Psoas muscle (tissue), 8 donors: ENCODE measurements at regions of chr14 and their contacts with region 1.

Region 1: DNA sequence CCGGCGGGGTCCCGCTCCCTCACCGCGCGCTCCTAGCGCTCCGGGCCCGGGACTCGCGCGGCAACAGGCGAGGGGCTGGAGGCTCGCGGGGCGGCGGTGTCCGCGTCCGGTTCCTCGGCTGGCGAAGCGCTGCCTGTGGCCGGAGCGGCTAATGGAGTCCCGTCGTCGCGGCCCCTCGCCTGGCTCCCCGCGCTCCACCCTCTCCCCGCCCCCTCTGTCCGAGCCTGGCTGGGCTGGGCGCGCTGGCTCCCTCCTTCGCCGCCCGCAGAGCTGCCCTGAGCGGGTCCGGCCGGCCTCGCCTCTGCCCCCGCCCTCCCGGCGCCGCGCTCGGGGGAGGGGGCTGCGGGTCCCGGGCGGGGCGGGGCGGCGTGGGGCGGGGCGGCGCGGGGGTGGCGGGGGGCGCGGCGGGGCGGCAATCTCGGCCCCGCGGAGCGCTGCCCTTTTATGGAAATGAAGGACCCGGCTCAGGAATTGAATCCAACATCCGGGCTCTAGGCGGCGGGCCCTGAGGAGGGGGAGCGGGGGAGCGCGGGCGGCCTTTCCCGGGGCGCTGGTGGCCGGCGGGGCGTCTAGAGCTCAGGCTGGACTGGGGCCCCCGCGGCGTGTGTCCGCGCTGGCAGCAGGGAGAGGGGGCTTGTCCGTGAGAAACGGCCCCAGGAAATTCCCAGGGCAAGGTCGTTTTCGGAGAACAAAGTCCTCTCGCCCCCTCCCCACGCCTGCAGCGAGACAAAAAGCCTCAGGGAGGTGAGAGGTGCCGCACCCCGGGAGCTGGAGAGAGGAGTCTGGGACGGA is at the start of gene FERMT2:
- DNase-seq: peak; percentile 89 to 94
- ATAC-seq: peak; percentile 87 to 91 (median 88)
- H3K4me3 ChIP-seq: peak within 1 kb of the TSS; percentile 96
- H3K27ac ChIP-seq: peak within 1 kb of the TSS; percentile 99
- H3K4me1 ChIP-seq: peaks cover 18% of the 10 kb centered on the region
- H3K27me3 ChIP-seq: no peaks in the 10 kb centered on the region
- CTCF ChIP-seq: no peak
- total RNA-seq, gene FERMT2: 57.5 to 104 (median 78.9) TPM

Region 2: GRCh38 chr14:52873694-52874093 is 77.4 kb before region 1 on chr14:
- intact Hi-C with region 1: loop called in 1 of 2 experiments (anchors 10 kb)
- DNase-seq: peak; percentile 47 to 67
- ATAC-seq: peak in 2 of 4 donors; percentile 44 to 68
- H3K4me3 ChIP-seq: no peak overlapping the region
- H3K27ac ChIP-seq: no peak overlapping the region
- H3K4me1 ChIP-seq: peaks cover 6% of the 10 kb centered on the region
- H3K27me3 ChIP-seq: no peaks in the 10 kb centered on the region
- CTCF ChIP-seq: no peak

Region 3: DNA sequence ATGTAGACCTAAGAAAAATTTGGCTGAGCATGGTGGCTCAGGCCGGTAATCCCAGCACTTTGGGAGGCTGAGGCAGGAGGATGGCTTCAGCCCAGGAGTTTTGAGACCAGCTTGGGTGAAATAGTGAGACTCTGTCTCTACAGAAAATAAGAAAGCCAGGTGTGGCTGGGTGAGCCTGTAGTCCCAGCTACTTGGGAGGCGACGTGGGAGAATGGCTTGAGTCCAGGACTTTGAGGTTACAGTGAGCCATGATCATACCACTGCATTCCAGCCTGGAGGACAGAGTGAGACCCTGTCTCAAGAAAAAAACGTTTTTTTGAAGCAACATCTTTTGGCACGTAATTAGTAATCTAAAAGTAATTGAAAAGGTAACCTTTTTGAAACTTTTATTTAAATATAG is 71.1 kb before region 1 on chr14:
- intact Hi-C with region 1: loop called (anchors 10 kb)
- DNase-seq: no peak
- ATAC-seq: no peak
- H3K4me3 ChIP-seq: no peak overlapping the region
- H3K27ac ChIP-seq: no peak overlapping the region
- H3K4me1 ChIP-seq: peaks cover 6% of the 10 kb centered on the region
- H3K27me3 ChIP-seq: no peaks in the 10 kb centered on the region
- CTCF ChIP-seq: no peak

Region 4: DNA sequence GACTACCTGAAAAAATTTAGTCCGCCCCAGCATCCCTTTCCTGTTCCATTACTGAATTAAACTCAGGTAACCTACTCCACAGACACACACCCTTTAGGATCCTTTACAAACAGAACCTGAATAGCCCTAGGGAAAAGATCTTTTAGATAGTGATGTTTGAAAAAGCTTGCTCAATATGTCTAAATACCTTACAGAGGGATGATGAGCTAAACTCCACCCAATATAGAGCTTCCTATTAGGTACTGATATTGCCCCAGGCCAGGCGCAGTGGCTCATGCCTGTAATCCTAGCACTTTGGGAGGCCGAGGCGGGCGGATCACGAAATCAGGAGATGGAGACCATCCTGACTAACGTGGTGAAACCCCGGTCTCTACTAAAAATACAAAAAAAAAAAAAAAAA is 50.4 kb before region 1 on chr14:
- intact Hi-C with region 1: loop called in 1 of 2 experiments (anchors 1 kb)
- DNase-seq: no peak
- ATAC-seq: no peak
- H3K4me3 ChIP-seq: no peak overlapping the region
- H3K27ac ChIP-seq: no peak overlapping the region
- H3K4me1 ChIP-seq: peaks cover 39% of the 10 kb centered on the region
- H3K27me3 ChIP-seq: no peaks in the 10 kb centered on the region
- CTCF ChIP-seq: no peak

Region 5: GRCh38 chr14:52918486-52918885 is 32.6 kb before region 1 on chr14:
- intact Hi-C with region 1: loop called (anchors 5 kb)
- DNase-seq: no peak
- ATAC-seq: peak; percentile 88 to 92 (median 88)
- H3K4me3 ChIP-seq: no peak overlapping the region
- H3K27ac ChIP-seq: peak overlapping the region; percentile 82
- H3K4me1 ChIP-seq: peaks cover 55% of the 10 kb centered on the region
- H3K27me3 ChIP-seq: no peaks in the 10 kb centered on the region
- CTCF ChIP-seq: no peak

Region 6: DNA sequence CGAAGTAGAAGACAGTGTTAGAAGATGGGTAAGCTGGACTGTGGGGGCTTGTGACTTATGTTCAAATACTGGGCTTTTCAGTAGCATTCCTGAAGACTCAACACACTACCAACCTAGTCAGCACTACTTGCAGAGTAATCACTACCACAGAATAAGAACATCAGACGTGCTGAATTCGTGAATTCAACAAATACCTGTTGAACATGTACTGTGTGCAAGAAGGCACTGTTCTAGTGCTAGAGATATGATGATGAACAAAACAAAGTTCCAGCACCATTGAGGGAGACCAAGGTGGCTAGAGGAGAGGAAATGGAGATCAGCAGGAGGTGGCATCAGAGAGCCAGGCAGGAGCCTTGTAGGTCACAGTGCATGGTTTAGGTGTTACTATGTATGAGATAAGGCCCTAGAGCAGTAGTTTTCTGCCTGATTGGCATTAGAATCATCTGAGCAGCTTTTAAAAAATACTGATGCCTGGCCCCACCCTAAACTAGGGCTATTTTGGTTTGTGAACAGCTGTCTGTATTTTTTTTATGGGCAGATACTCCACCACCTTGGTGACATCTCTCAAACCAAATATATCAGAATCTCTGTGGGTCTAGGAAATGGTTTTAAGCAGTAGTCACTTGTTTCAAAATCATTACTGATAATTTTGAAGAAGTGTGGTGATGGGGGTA is 27.1 kb before region 1 on chr14:
- intact Hi-C with region 1: loop called (anchors 5 kb)
- DNase-seq: no peak
- ATAC-seq: peak; percentile 64 to 89 (median 81)
- H3K4me3 ChIP-seq: no peak overlapping the region
- H3K27ac ChIP-seq: peak overlapping the region; percentile 11
- H3K4me1 ChIP-seq: peaks cover 79% of the 10 kb centered on the region
- H3K27me3 ChIP-seq: no peaks in the 10 kb centered on the region
- CTCF ChIP-seq: peak; percentile 31

Region 7: GRCh38 chr14:52998376-52999015 is 47.4 kb after region 1 on chr14:
- intact Hi-C with region 1: no loop called
- DNase-seq: no peak
- ATAC-seq: no peak
- H3K4me3 ChIP-seq: no peak overlapping the region
- H3K27ac ChIP-seq: no peak overlapping the region
- H3K4me1 ChIP-seq: no peaks in the 10 kb centered on the region
- H3K27me3 ChIP-seq: peaks cover 0 to 2% (median 0%) of the 10 kb centered on the region in 3 donors
- CTCF ChIP-seq: no peak